Activated T-helper 1 cell treated with anti-CD3 and anti-CD28 coated beads, Interleukin-12 subunit alpha, Interleukin-12 subunit beta, Interleukin-2, Interleukin-4 antibody, amounts not matched to agents 30 ng/mL and 10 ng/mL and 1 ng/mL, durations not matched to agents 14 hours and 24 hours and 36 hours (primary cell): ENCODE measurements at regions of chr7 and their contacts with region 1.

Region 1: DNA sequence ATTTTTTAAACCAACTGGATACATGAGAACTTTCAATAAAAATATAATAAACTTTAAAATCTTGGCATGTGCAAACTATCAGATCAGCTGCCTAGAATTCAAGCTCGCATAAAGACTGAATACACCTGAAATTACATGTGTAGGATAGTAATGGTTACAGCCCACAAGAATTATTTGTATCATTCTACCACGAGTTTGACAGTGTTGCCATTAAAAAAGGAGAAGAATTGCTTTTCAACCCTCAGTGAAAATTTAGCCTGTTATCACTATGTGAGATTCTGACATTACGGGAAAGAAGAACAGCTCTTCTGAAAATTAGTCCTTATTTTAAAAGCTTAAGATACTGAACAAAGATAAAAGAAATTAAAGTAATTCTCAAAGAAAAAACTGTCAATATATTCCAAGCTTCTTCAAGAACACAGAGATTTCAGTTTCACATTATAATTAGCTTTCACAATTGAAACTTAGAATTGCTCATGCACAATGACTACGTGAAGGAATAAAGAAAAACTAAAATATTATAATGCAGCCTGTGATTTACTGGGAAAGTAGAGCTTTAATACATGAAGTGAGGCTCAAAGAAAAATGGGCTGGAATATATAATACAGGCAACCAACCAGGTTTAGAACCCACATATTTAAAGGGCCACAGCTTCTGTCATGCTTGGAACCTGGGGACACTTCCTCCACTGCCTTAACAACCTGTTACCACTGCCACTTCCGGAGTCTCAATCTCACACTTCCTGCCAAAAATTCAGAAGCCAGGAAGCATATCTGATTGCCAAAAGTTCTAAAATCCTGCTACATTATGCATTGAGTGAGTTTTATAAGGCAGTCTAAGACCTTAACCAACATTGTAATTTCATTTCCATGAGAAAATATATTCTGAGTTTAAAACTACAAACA is 23.2 kb downstream of the TPK1 start:
- DNase-seq: peak; percentile 45
- H3K4me3 Mint-ChIP-seq: peak overlapping the region; percentile 70
- H3K27ac Mint-ChIP-seq: peak overlapping the region; percentile 84
- H3K4me1 Mint-ChIP-seq: peaks cover 48% of the 10 kb centered on the region
- H3K27me3 Mint-ChIP-seq: no peaks in the 10 kb centered on the region

Region 2: DNA sequence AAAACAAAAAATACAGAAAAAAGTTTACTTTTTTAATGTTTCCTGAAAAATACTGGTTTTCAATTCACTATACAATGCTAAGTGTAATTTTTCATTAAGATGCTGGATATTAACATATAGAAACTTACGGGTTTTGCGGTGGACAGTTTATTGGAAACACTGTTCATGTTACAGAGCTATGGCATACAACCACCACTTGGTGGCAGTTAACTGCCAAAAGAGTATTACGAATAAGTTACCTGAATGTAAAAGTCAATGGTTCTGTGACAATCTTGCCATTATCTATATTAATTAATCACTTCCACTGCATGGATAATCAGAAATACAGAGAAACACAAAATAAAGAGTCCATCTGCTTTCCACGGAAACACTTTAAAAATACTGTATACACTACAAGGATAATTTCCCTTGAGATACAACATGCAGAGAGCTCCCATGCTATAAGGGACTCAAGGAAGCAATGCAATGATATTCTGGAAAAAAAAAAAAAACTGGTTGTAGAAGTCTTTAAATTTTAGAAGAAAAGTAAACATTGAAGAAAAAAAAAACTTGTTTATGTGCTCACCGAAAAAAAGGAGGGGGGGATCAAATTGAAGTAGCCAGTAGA is 73.8 kb before region 1 on chr7:
- intact Hi-C with region 1: loop called (anchors 2 kb)
- DNase-seq: peak; percentile 1
- H3K4me3 Mint-ChIP-seq: no peak overlapping the region
- H3K27ac Mint-ChIP-seq: no peak overlapping the region
- H3K4me1 Mint-ChIP-seq: no peaks in the 10 kb centered on the region
- H3K27me3 Mint-ChIP-seq: no peaks in the 10 kb centered on the region

Region 3: DNA sequence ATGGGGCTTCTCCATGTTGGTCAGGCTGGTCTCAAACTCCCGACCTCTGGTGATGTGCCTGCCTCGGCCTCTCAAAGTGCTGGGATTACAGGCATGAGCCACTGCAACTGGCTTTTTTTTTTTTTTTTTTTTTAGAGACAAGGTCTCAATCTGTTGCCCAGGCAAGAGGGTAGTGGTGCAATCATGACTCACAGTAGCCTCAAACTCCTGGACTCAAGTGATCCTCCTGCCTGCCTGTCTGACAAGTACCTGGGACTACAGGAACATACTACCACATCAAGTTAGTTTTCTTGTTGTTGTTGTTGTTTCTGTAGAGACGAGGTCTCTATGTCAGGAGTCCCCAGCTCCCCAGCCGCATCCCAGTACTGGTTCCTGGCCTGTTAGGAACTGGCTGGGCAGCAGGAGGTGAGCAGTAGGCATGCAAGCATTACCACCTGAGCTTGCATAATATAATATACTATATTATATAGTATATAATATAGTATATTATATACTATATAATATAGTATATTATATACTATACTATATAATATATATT is 32.5 kb before region 1 on chr7:
- intact Hi-C with region 1: no loop called
- DNase-seq: no peak
- H3K4me3 Mint-ChIP-seq: no peak overlapping the region
- H3K27ac Mint-ChIP-seq: no peak overlapping the region
- H3K4me1 Mint-ChIP-seq: peaks cover 10% of the 10 kb centered on the region
- H3K27me3 Mint-ChIP-seq: no peaks in the 10 kb centered on the region

Region 4: GRCh38 chr7:144827621-144828020 is 15.0 kb after region 1 on chr7:
- intact Hi-C with region 1: loop called (anchors 2 kb)
- DNase-seq: no peak
- H3K4me3 Mint-ChIP-seq: no peak overlapping the region
- H3K27ac Mint-ChIP-seq: no peak overlapping the region
- H3K4me1 Mint-ChIP-seq: peaks cover 35% of the 10 kb centered on the region
- H3K27me3 Mint-ChIP-seq: no peaks in the 10 kb centered on the region

Region 5: GRCh38 chr7:144835652-144836544 is 23.3 kb after region 1 on chr7 and contains the start of gene TPK1:
- intact Hi-C with region 1: loop called (anchors 1 kb)
- DNase-seq: peak; percentile 90
- H3K4me3 Mint-ChIP-seq: peak within 1 kb of the TSS; percentile 97
- H3K27ac Mint-ChIP-seq: peak within 1 kb of the TSS; percentile 100
- H3K4me1 Mint-ChIP-seq: peaks cover 45% of the 10 kb centered on the region
- H3K27me3 Mint-ChIP-seq: no peaks in the 10 kb centered on the region
- total RNA-seq, gene TPK1: 11.5 TPM in 2 replicates

Region 6: DNA sequence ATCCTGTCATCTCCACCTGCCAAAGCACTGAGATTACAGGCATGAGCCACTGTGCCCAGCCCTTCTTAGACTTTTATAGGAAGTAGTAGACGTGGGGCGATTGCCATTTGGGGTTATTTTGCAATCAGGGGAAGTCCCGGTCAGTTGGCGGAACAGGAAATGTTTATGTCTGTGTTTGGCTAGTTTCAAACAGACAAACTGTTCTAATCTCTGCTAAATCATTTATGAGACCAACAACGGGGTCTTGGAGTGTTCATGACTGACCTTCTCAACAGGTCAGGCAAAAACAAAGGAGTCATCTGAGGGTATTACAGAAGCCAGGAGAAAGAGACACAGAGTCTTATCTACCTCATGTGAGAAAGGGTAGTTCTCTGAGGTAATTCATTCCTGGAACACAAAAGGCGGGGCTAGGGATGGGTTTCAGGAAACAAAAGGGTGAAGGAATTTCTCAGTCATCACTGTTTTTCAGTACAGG is 29.8 kb after region 1 on chr7:
- intact Hi-C with region 1: loop called (anchors 1 kb)
- DNase-seq: no peak
- H3K4me3 Mint-ChIP-seq: peak overlapping the region; percentile 34
- H3K27ac Mint-ChIP-seq: peak overlapping the region; percentile 92
- H3K4me1 Mint-ChIP-seq: peaks cover 30% of the 10 kb centered on the region
- H3K27me3 Mint-ChIP-seq: peaks cover under 1% of the 10 kb centered on the region

Region 7: DNA sequence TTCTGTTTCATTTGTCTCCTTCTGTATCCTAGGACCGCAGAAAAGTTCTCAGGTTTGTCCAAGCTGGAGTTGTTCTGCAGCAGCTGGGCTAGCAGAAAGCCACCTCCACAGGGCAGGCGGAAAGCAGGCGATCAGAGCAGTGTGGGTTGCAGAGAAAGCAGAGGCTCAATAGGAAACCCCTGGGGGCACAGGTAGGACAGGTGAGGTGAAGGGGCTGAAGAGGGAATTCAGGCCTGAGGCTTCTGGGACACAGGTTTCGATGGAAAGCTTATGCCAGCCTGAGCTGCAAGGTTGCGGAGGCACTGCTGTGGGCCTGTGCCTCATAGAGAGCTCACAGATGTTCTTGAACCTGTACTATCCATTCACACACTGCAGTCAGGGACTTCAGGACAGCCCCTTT is 218.1 kb after region 1 on chr7:
- intact Hi-C with region 1: no loop called
- DNase-seq: no peak
- H3K4me3 Mint-ChIP-seq: no peak overlapping the region
- H3K27ac Mint-ChIP-seq: no peak overlapping the region
- H3K4me1 Mint-ChIP-seq: no peaks in the 10 kb centered on the region
- H3K27me3 Mint-ChIP-seq: peaks cover 2% of the 10 kb centered on the region